SK-N-SH (cell line): ENCODE measurements at regions of chr20 and their contacts with region 1.

Region 1: DNA sequence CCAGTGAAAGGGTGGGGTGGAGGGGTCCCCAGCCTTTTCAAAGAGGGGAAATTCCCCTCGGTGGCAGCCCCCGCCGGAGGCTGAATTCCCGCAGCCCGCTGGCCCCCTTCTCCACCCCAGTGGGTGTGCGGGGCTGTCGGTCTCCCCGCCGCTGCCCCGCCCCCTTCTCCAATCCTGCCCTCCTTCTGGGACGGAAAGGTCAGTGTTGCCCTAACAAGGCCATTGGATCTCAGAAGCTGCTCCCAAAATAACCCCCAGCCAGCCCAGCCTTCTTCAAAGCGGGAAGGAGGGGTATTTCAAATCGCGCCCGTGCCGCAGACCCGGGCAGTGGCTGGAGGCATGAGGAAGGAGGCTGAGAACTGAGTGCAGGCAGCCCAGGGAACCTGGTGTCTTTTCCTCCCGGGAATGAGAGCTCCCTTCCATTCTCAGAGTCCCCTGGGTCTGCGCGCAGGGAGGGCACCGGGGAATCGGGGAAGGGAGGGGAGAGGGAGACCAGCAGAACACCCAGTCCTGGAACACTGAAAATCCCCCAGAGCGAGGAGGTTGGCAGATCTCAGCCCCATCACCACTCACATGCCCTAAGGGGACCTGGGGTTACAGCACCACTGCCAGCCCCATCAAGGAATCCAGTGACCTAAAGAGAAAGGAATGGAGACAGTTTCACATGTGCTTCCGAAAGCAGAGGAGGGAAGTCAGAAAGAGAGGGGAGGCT is at the start of gene JPH2:
- DNase-seq: peak; percentile 64
- H3K4me3 ChIP-seq: peak within 1 kb of the TSS; percentile 39 to 60
- H3K27ac ChIP-seq: peak within 1 kb of the TSS; percentile 54 to 78
- H3K4me1 ChIP-seq: peaks cover 11 to 16% of the 10 kb centered on the region in 2 experiments; a peak in 2 of 4 replicates
- H3K27me3 ChIP-seq: no peaks in the 10 kb centered on the region
- CTCF ChIP-seq: no peak
- EP300 ChIP-seq: no peak
- RAD21 ChIP-seq: no peak
- polyA plus RNA-seq, gene JPH2: 0.67 and 0.75 TPM in 2 replicates

Region 2: GRCh38 chr20:43736588-43737158 is 450.5 kb before region 1 on chr20:
- CTCF ChIA-PET with region 1: no interaction called
- POLR2A ChIA-PET with region 1: no interaction called
- DNase-seq: no peak
- H3K4me3 ChIP-seq: no peak overlapping the region
- H3K27ac ChIP-seq: no peak overlapping the region
- H3K4me1 ChIP-seq: no peaks in the 10 kb centered on the region
- H3K27me3 ChIP-seq: no peaks in the 10 kb centered on the region
- CTCF ChIP-seq: no peak
- EP300 ChIP-seq: no peak
- RAD21 ChIP-seq: no peak

Region 3: DNA sequence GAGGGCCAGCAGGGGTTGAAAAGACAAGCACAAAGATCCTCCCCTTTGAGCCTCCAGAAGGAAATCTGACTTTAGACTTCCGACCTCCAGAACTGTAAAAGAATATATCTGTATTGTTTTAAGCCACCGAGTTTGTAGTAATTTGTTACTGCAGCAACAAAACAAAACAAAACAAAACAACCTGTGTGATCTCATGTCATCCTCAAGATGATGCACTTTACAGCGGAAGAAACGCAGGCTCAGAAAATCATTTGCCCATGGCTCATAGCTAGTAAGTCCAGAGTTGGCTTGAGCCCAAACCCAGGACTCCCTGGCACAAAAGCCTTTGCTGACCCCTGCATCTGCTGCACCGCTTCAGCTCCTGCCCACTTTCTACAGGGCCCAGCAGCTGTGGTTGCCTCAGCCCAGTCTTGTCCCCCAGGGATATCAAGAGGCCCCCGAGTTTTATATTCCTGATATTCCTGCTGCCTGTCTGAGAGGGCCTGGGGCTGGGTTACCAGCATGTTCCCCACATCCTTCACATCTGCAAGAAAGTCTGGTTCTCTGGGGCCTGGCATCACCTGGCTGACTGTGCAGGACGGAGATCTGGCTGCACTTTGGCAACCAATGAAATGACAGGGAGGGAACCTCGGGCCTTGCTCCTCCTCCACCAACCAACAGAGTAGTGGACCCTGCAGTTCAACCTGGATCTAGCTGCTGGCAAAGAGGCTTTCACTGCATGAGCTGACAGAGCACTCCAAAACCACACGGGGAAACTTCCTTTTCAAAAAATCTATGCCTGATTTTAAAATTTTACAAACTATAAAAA is 57.1 kb before region 1 on chr20:
- CTCF ChIA-PET with region 1: interaction called, 32 read pairs
- POLR2A ChIA-PET with region 1: no interaction called
- DNase-seq: no peak
- H3K4me3 ChIP-seq: no peak overlapping the region
- H3K27ac ChIP-seq: no peak overlapping the region
- H3K4me1 ChIP-seq: no peaks in the 10 kb centered on the region; a peak in 1 of 4 replicates
- H3K27me3 ChIP-seq: no peaks in the 10 kb centered on the region
- CTCF ChIP-seq: no peak
- EP300 ChIP-seq: no peak
- RAD21 ChIP-seq: no peak

Region 4: GRCh38 chr20:44142413-44142812 is 44.8 kb before region 1 on chr20:
- CTCF ChIA-PET with region 1: interaction called, 17 read pairs
- POLR2A ChIA-PET with region 1: no interaction called
- DNase-seq: no peak
- H3K4me3 ChIP-seq: no peak overlapping the region
- H3K27ac ChIP-seq: no peak overlapping the region
- H3K4me1 ChIP-seq: no peaks in the 10 kb centered on the region
- H3K27me3 ChIP-seq: no peaks in the 10 kb centered on the region
- CTCF ChIP-seq: no peak
- EP300 ChIP-seq: no peak
- RAD21 ChIP-seq: no peak

Region 5: GRCh38 chr20:44166477-44166876 is 20.7 kb before region 1 on chr20:
- CTCF ChIA-PET with region 1: interaction called, 17 read pairs
- POLR2A ChIA-PET with region 1: no interaction called
- DNase-seq: no peak
- H3K4me3 ChIP-seq: no peak overlapping the region
- H3K27ac ChIP-seq: peak overlapping the region; percentile 75 to 79; a peak in 3 of 4 replicates
- H3K4me1 ChIP-seq: peaks cover 5 to 23% of the 10 kb centered on the region in 2 experiments; a peak in 2 of 4 replicates
- H3K27me3 ChIP-seq: no peaks in the 10 kb centered on the region
- CTCF ChIP-seq: no peak
- EP300 ChIP-seq: no peak
- RAD21 ChIP-seq: no peak

Region 6: DNA sequence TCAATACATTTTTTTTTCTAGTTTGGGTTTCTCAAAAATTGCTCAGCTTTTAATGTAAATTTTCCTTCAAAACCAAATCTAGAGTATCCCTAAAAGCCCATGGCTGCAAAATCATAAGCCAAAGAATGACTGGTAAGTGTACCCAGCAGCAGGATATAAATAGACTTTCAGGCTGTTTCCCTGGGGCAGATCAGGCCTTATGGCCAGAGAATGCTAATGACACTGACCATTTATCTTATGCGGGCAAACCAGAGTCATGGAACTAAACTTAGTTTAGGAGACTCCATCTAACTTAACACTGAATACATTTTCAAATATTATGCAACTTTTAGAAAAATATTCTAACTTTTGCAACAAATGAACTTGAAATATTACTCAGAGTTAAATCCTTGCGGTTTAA is 16.0 kb after region 1 on chr20:
- CTCF ChIA-PET with region 1: interaction called, 10 read pairs
- POLR2A ChIA-PET with region 1: no interaction called
- DNase-seq: no peak
- H3K4me3 ChIP-seq: no peak overlapping the region
- H3K27ac ChIP-seq: peak overlapping the region; percentile 60 to 85; a peak in 3 of 4 replicates
- H3K4me1 ChIP-seq: peaks cover 0 to 29% of the 10 kb centered on the region in 2 experiments
- H3K27me3 ChIP-seq: no peaks in the 10 kb centered on the region
- CTCF ChIP-seq: no peak
- EP300 ChIP-seq: no peak
- RAD21 ChIP-seq: no peak

Region 7: DNA sequence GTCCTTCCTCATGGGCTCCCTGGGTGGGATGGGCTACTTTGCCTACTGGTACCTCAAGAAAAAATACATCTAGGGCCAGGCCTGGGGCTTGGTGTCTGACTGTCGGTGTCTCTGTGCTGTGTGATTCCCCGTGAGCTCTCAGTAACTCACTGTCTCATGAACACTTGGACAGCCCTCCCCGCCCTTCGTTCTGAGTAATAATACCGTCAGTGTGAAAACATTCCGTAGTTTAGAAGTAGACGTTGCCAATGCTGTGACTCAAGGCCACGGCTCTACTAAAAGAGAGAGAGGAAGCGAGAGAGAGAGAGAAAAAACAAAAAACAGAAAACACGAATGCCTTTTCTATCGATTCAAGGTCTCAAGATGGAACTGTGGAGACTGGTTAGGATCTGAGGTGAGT is 92.0 kb after region 1 on chr20:
- CTCF ChIA-PET with region 1: no interaction called
- POLR2A ChIA-PET with region 1: no interaction called
- DNase-seq: no peak
- H3K4me3 ChIP-seq: no peak overlapping the region
- H3K27ac ChIP-seq: no peak overlapping the region
- H3K4me1 ChIP-seq: no peaks in the 10 kb centered on the region
- H3K27me3 ChIP-seq: no peaks in the 10 kb centered on the region
- CTCF ChIP-seq: no peak
- EP300 ChIP-seq: no peak
- RAD21 ChIP-seq: no peak